ENCODE measurements at regions of chr4 and their contacts with region 1.

Region 1: GRCh38 chr4:60579335-60579734 is 620.8 kb upstream of the ADGRL3 start:
- DNase-seq: peak; percentile 17
- H3K27ac ChIP-seq: no peak overlapping the region
- CTCF ChIP-seq: no peak

Region 2: GRCh38 chr4:60868232-60868960 is 289.1 kb after region 1 on chr4:
- CTCF ChIA-PET with region 1: interaction called, 12 read pairs
- POLR2A ChIA-PET with region 1: no interaction called
- DNase-seq: no peak
- H3K27ac ChIP-seq: no peak overlapping the region
- CTCF ChIP-seq: no peak